Astrocyte of the cerebellum (primary cell): ENCODE measurements at regions of chr6 and their contacts with region 1.

Region 1: GRCh38 chr6:163413345-163414116 is 987 bp upstream of the QKI start:
- DNase-seq: peak; percentile 84
- H3K4me3 ChIP-seq: peak overlapping the region; percentile 59
- CTCF ChIP-seq: no peak

Region 2: GRCh38 chr6:162856885-162857284 is 556.6 kb before region 1 on chr6:
- in situ Hi-C with region 1: loop called (anchors 10 kb)
- DNase-seq: peak; percentile 90
- H3K4me3 ChIP-seq: peak overlapping the region; percentile 13
- CTCF ChIP-seq: peak; percentile 72